Calu3 (cell line): ENCODE measurements at regions of chr9 and their contacts with region 1.

Region 1: DNA sequence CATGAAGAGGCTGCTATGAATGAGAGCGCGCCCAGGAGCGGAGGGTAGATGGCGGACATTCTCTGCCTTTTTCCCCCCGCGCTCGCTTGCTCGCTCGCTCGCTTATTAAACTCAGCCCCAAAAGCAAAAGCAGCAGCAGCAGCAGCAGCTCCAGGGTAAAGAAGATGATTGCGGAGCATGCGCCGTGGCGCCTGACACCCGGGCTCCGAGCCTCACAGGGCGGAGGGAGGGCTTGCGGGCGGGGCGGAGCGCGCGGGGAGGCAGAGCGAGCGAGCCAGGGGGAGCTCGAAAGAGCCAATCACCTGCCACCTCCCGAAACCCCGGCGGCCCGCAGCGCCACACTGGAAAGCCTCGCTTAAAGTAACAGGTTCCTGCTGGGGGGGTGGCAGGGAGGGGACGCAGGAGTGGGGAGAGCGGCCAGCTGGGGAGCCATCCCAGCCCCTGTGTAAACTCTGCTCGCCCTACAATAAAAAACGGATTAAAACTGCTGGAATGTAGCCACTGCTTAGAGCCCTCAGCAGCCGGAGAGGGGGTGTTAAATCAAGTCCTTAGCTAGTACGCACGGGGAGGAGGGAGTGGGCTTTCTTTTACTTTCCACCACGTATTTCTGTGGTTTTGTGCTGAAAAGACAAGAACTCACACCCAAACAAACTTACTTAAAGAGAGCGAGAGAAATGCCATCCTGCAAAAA is at the start of gene MLLT3:
- DNase-seq: peak; percentile 93
- H3K4me3 Mint-ChIP-seq: peak within 1 kb of the TSS; percentile 84
- H3K27ac Mint-ChIP-seq: peak within 1 kb of the TSS; percentile 64
- H3K4me1 Mint-ChIP-seq: peaks cover 10% of the 10 kb centered on the region
- H3K27me3 Mint-ChIP-seq: no peaks in the 10 kb centered on the region
- CTCF ChIP-seq: no peak
- total RNA-seq, gene MLLT3: 22.9 and 23.1 TPM in 2 replicates

Region 2: GRCh38 chr9:20356403-20357035 is 266.0 kb before region 1 on chr9:
- CTCF ChIA-PET with region 1: interaction called, 7 read pairs
- intact Hi-C with region 1: loop called (anchors 2 kb)
- DNase-seq: peak; percentile 56
- H3K4me3 Mint-ChIP-seq: peak overlapping the region; percentile 49
- H3K27ac Mint-ChIP-seq: peak overlapping the region; percentile 81
- H3K4me1 Mint-ChIP-seq: peaks cover 23% of the 10 kb centered on the region
- H3K27me3 Mint-ChIP-seq: no peaks in the 10 kb centered on the region
- CTCF ChIP-seq: peak; percentile 24

Region 3: GRCh38 chr9:20552874-20553575 is 69.5 kb before region 1 on chr9:
- CTCF ChIA-PET with region 1: interaction called, 7 read pairs
- intact Hi-C with region 1: loop called (anchors 1 kb)
- DNase-seq: no peak
- H3K4me3 Mint-ChIP-seq: peak overlapping the region; percentile 30
- H3K27ac Mint-ChIP-seq: peak overlapping the region; percentile 35
- H3K4me1 Mint-ChIP-seq: peaks cover 50% of the 10 kb centered on the region
- H3K27me3 Mint-ChIP-seq: no peaks in the 10 kb centered on the region
- CTCF ChIP-seq: no peak

Region 4: DNA sequence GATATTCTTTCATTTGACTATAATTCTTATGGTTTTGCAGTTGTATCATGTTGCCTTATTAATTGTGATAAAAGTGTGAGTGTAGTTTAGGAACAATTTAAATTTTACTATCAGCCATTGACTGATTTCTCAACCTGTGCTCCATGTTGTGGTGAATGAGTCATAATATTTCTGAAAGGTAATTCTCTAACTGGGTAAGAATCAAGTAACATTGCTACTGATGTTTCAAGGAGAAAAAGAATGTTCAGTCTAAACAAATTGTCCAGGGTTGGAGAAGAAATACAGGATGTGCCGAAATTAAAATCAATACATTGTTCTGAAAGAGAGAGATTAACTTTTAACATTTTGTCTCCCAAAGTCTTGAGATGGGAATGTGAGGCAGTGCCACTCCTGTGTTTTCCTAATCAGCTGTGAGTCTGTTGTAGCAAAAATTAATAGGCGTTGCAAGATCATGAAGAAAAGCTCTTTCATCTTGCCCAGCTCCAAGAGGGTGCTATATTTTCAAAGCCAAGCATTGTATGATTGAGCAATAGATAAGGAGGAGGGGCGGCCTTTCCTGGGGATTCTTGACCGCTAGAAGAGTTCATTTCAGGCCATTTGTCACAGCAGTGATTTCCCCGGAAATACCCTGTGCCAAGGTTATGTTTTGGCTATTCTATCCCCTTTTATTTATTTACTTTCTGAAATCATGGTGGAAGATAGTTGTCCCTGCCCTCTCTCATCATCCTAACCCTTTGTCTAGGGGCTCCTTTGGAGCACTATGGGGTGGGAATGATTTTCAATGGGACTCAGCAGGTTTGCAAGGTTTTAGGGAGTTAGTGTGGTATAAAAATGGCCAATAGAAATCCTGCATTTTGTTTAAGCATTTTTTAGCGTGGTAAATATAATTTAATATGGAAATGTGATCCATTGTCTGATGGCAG is 213.2 kb after region 1 on chr9:
- CTCF ChIA-PET with region 1: no interaction called
- intact Hi-C with region 1: loop called (anchors 10 kb)
- DNase-seq: peak; percentile 41
- H3K4me3 Mint-ChIP-seq: peak overlapping the region; percentile 50
- H3K27ac Mint-ChIP-seq: peak overlapping the region; percentile 69
- H3K4me1 Mint-ChIP-seq: peaks cover 13% of the 10 kb centered on the region
- H3K27me3 Mint-ChIP-seq: no peaks in the 10 kb centered on the region
- CTCF ChIP-seq: no peak

Region 5: GRCh38 chr9:20941174-20941690 is 318.8 kb after region 1 on chr9:
- CTCF ChIA-PET with region 1: interaction called, 11 read pairs
- intact Hi-C with region 1: loop called (anchors 1 kb)
- DNase-seq: peak; percentile 39
- H3K4me3 Mint-ChIP-seq: no peak overlapping the region
- H3K27ac Mint-ChIP-seq: no peak overlapping the region
- H3K4me1 Mint-ChIP-seq: no peaks in the 10 kb centered on the region
- H3K27me3 Mint-ChIP-seq: no peaks in the 10 kb centered on the region
- CTCF ChIP-seq: peak; percentile 47